Heart left ventricle (tissue), 16 donors: ENCODE measurements at regions of chr1 and their contacts with region 1.

Region 1: DNA sequence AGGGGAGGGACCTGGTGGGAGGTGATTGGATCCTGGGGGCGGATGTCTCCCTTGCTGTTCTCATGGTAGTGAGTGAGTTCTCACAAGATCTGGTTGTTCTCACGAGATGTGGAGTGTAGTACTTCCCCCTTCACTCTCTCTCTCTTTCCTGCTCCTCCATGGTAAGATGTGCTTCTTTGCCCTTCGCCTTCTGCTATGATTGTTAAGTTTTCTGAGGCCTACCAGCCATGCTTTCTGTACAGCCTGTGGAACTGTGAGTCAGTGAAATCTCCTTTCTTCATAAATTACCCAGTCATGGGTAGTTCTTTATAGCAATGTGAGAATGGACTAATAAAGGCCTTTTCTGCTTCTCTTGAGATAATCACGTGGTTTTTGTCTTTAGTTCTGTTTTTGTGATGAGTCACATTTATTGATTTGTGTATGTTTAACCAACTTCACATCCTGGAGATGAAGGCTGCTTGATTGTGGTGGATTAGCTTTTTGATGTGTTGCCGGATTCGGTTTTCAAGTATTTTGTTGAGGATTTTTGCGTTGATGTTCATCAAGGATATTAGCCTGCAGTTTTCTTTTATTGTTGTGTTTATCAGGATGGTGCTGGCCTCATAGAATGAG is 45.5 kb downstream of the RABGAP1L start:
- DNase-seq: no peak
- ATAC-seq: no peak
- H3K4me3 ChIP-seq: no peak overlapping the region
- H3K27ac ChIP-seq: peak overlapping the region in 10 of 12 donors; percentile 13 to 70 (median 40)
- H3K4me1 ChIP-seq: peaks cover 0 to 52% (median 18%) of the 10 kb centered on the region in 12 donors
- H3K27me3 ChIP-seq: no peaks in the 10 kb centered on the region
- CTCF ChIP-seq: no peak
- POLR2A ChIP-seq: no peak

Region 2: GRCh38 chr1:174114788-174115448 is 89.9 kb before region 1 on chr1:
- intact Hi-C with region 1: loop called in 2 of 10 experiments (anchors 5 to 10 kb)
- DNase-seq: no peak
- ATAC-seq: peak in 3 of 4 donors; percentile 34 to 77 (median 48)
- H3K4me3 ChIP-seq: no peak overlapping the region
- H3K27ac ChIP-seq: no peak overlapping the region
- H3K4me1 ChIP-seq: peaks cover 0 to 17% (median 0%) of the 10 kb centered on the region in 12 donors
- H3K27me3 ChIP-seq: no peaks in the 10 kb centered on the region
- CTCF ChIP-seq: peak; percentile 32 to 75 (median 52)
- POLR2A ChIP-seq: no peak

Region 3: DNA sequence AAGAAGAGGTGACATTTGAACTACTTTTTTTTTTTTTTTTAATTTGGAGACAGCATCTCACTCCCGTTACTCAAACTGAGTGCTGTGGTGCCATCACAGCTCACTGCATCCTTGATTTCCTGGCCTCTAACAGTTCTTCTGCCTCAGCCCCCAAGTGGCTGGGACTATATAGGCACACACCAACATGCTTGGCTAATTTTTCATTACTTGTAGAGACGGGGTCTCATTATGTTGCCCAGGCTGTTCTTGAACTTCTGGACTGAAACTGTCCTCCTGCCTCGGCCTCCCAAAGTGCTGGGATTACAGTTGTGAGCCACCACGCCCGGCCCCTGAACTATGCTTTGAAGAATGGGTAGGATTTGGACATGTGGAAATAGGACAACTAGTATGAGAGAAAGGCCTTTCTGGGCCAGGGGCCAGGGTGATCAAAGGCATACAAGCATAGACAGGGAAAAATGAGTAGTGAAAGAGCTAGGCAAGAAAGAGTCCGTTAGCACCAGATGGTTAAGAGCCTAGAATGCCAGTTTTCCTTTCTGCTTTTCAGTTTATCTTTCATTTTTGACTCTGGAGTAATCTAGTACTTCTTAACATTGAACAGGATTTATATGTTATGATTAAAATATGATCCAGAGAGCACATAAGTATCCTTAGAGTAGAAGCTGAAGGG is 39.2 kb before region 1 on chr1:
- intact Hi-C with region 1: loop called in 2 of 10 experiments (anchors 5 kb)
- DNase-seq: peak in 1 of 5 donors; percentile 51
- ATAC-seq: peak in 2 of 4 donors; percentile 63 to 65
- H3K4me3 ChIP-seq: no peak overlapping the region
- H3K27ac ChIP-seq: peak overlapping the region; percentile 38 to 87 (median 74)
- H3K4me1 ChIP-seq: peaks cover 0 to 62% (median 36%) of the 10 kb centered on the region in 12 donors
- H3K27me3 ChIP-seq: no peaks in the 10 kb centered on the region
- CTCF ChIP-seq: no peak
- POLR2A ChIP-seq: no peak

Region 4: DNA sequence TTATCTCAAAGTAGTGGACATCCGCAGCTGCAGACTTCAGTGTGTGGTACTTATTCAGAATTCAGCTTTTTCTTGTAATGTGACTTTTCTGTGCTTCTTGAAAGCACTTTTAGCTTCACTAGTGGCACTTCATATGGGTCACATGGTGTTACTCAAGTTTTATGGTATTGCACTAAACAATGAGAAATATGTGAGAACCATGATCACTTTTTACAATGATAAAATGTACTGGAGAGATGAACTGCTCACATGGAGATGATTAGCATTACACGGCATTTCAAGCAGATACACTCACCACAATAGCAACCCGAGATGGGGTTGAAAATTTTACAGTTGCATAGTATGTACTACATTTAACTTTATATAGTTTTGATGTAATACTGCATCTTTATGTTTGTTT is 202.9 kb after region 1 on chr1:
- intact Hi-C with region 1: no loop called
- DNase-seq: no peak
- ATAC-seq: no peak
- H3K4me3 ChIP-seq: no peak overlapping the region
- H3K27ac ChIP-seq: no peak overlapping the region
- H3K4me1 ChIP-seq: peaks cover 0 to 5% (median 0%) of the 10 kb centered on the region in 12 donors
- H3K27me3 ChIP-seq: no peaks in the 10 kb centered on the region
- CTCF ChIP-seq: no peak
- POLR2A ChIP-seq: no peak